Endothelial cell of umbilical vein (primary cell): ENCODE measurements at regions of chr2 and their contacts with region 1.

Region 1: DNA sequence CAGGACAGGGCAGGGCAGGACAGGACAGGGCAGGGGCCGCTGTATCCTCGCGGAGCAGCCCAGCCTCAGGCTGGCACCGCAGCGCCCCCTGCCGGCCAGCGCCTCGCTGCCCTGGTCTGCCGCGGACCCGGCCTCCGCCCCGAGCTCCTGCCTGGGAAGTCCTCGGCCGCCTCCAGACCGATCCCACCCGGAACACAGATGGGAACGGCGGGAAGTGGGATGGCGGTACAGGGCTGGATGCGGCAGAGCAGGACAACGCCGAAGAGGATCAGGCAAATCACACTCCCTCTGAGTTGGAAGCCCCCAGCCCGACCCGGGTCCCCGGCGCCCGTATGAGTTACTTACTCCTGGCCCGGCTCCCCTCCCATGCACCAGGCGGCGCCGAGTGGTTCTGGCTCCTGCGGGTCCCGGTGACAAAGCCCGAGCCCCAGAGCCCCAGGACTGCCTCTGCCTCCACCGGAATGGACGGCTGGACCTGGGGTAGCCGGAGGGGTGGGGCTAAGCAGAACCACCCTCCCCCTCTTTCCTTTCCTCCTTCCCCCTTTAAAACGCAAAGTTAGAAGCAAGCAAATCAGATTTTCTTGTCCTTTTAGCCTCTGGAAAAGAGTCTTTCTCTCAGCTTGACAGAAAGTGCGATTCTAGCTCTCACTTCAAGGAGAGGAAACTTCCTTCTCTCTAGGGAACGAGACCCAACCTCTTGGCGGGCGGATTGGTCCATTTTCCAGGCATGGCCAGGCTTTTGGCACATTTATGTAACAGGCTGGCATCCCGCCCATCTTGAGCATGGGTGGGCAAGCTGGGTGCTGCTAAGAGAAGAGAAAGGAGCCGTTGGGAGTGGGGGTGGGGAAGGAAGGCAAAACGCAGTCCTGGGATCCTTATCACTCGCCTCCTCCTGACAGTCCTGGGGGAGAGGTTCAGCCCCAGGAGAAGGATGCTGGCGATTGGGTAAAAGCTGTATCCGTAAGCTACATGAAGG is at the start of gene TP53I3:
- DNase-seq: peak; percentile 93
- H3K4me3 ChIP-seq: peak within 1 kb of the TSS; percentile 53 to 85 (median 73)
- H3K27ac ChIP-seq: peak within 1 kb of the TSS; percentile 66
- H3K4me1 ChIP-seq: peaks cover 16% of the 10 kb centered on the region
- H3K27me3 ChIP-seq: no peaks in the 10 kb centered on the region
- CTCF ChIP-seq: peak; percentile 92 to 99
- POLR2A ChIP-seq: peak; percentile 96
- total RNA-seq, gene TP53I3: 94.2 and 102 TPM in 2 replicates

Region 2: GRCh38 chr2:23055251-23055650 is 1029.4 kb before region 1 on chr2:
- CTCF ChIA-PET with region 1: no interaction called
- POLR2A ChIA-PET with region 1: no interaction called
- dilution Hi-C with region 1: no loop called
- intact Hi-C with region 1: no loop called
- DNase-seq: no peak
- H3K4me3 ChIP-seq: no peak overlapping the region
- H3K27ac ChIP-seq: no peak overlapping the region
- H3K4me1 ChIP-seq: no peaks in the 10 kb centered on the region
- H3K27me3 ChIP-seq: no peaks in the 10 kb centered on the region
- CTCF ChIP-seq: no peak
- POLR2A ChIP-seq: no peak

Region 3: GRCh38 chr2:23939987-23940717 is 144.5 kb before region 1 on chr2 and contains the start of gene UBXN2A:
- CTCF ChIA-PET with region 1: interaction called, 3 read pairs
- POLR2A ChIA-PET with region 1: interaction called, 5 read pairs
- dilution Hi-C with region 1: no loop called
- intact Hi-C with region 1: loop called (anchors 1 kb)
- DNase-seq: peak; percentile 80
- H3K4me3 ChIP-seq: peak within 1 kb of the TSS; percentile 50 to 92 (median 82)
- H3K27ac ChIP-seq: peak within 1 kb of the TSS; percentile 78
- H3K4me1 ChIP-seq: peaks cover 15% of the 10 kb centered on the region
- H3K27me3 ChIP-seq: no peaks in the 10 kb centered on the region
- CTCF ChIP-seq: no peak
- POLR2A ChIP-seq: peak; percentile 77
- total RNA-seq, gene UBXN2A: 16.8 and 19.0 TPM in 2 replicates

Region 4: GRCh38 chr2:24046930-24047702 is 37.6 kb before region 1 on chr2 and contains the start of gene WDCP:
- CTCF ChIA-PET with region 1: interaction called, 7 read pairs
- POLR2A ChIA-PET with region 1: interaction called, 7 read pairs
- dilution Hi-C with region 1: no loop called
- intact Hi-C with region 1: loop called (anchors 1 kb)
- DNase-seq: peak; percentile 99
- H3K4me3 ChIP-seq: peak within 1 kb of the TSS; percentile 89 to 95 (median 89)
- H3K27ac ChIP-seq: peak within 1 kb of the TSS; percentile 36
- H3K4me1 ChIP-seq: peaks cover 23% of the 10 kb centered on the region
- H3K27me3 ChIP-seq: no peaks in the 10 kb centered on the region
- CTCF ChIP-seq: no peak
- POLR2A ChIP-seq: peak; percentile 97
- total RNA-seq, gene WDCP: 15.4 and 15.9 TPM in 2 replicates

Region 5: DNA sequence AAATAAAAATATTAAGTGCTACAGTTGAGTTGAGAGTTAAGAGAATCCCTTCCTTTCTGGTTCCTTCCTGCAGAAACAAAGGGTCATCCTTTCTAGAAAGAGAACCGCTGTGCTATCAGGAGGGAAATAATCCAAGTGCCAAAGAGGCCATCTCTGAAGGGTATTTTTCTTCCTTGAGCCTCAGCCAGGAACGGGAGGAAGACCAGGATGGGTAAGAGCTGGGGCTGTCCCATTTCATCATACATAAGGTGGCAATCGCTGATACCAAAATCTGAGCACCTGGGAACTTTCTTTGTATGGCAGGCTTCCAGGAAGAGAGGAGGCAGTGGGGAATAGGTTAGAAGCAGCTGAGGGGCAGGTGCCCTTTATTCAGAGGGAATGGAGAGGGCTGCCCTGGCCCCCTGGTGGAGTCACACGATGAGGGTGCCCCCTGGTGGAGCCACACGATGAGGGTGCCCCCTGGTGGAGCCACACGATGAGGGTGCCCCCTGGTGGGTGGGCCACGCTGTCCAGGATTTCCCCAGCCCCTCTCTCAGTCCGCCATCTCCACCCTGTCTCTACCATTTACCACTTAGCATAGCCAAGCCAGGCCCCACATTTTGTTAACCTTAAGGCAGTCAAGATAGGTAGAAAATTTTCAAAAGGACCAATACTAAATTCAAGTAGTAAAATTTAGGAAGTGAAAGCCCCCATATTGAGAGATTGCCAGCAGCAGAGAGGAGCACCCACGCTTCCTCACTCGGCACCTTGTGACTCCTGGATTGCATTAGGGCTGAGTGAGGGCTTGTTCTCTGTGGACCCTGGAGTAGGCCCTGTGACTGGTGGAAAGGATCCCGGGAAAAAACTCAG is 79.7 kb after region 1 on chr2:
- CTCF ChIA-PET with region 1: interaction called, 7 read pairs
- POLR2A ChIA-PET with region 1: no interaction called
- dilution Hi-C with region 1: no loop called
- intact Hi-C with region 1: loop called (anchors 1 kb)
- DNase-seq: no peak
- H3K4me3 ChIP-seq: no peak overlapping the region
- H3K27ac ChIP-seq: no peak overlapping the region
- H3K4me1 ChIP-seq: no peaks in the 10 kb centered on the region
- H3K27me3 ChIP-seq: no peaks in the 10 kb centered on the region
- CTCF ChIP-seq: peak; percentile 64 to 76
- POLR2A ChIP-seq: no peak

Region 6: DNA sequence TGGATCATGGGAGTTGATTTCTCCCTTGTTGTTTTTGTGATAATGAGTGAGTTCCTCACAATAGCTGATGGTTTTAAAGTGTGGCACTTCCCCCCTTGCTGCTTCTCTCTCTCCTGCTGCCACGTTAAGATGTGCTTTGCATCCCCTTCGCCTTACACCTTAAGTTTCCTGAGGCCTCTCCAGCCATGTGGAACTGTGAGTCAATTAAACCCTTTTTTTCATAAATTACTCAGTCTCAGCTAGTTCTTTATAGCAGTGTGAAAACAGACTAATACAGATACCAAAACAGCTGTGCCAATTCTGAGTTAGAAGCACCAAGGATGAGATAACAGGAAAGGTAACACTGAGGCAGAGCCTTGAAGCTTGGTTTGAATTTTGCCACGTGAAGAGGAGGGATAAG is 231.0 kb after region 1 on chr2:
- CTCF ChIA-PET with region 1: no interaction called
- POLR2A ChIA-PET with region 1: no interaction called
- dilution Hi-C with region 1: no loop called
- intact Hi-C with region 1: no loop called
- DNase-seq: no peak
- H3K4me3 ChIP-seq: no peak overlapping the region
- H3K27ac ChIP-seq: no peak overlapping the region
- H3K4me1 ChIP-seq: peaks cover 3% of the 10 kb centered on the region
- H3K27me3 ChIP-seq: no peaks in the 10 kb centered on the region
- CTCF ChIP-seq: no peak
- POLR2A ChIP-seq: no peak

Region 7: DNA sequence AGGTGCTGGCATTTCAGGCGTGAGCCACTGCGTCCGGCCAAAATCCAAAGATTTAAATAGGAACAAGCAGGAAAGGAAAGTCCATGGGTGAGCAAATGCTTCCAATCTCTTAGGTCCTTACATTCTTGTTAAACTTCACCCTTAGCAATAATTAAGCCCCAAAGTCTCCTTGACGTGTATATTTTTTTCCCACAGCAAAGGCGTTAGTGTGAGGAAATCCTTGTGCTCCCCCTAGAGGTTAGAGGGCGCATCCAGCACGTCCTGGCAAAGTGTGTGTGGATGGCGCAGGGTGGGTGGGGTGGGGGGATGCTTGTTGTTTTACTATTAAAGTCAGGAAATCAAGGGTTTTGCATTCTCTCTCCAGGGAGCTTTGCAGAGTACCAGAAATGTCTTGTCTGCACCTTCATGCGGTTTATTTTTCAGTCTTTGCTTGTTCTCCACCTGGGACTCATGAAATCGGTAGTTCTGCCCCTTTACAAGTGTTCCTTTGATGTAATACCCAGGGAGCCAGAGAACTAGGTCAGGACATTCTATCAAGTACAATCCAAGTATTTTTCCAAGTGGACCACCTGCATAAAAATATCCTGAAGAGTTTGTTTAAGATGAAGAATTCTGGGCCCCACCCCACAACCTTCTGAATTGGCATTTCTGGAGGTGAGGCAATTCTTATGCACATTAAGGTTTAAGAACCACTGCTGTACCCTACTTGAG is 297.8 kb after region 1 on chr2:
- CTCF ChIA-PET with region 1: interaction called, 5 read pairs
- POLR2A ChIA-PET with region 1: no interaction called
- dilution Hi-C with region 1: no loop called
- intact Hi-C with region 1: loop called (anchors 1 kb)
- DNase-seq: peak; percentile 66
- H3K4me3 ChIP-seq: no peak overlapping the region
- H3K27ac ChIP-seq: no peak overlapping the region
- H3K4me1 ChIP-seq: no peaks in the 10 kb centered on the region
- H3K27me3 ChIP-seq: no peaks in the 10 kb centered on the region
- CTCF ChIP-seq: peak; percentile 30 to 78
- POLR2A ChIP-seq: no peak